ENCODE measurements at regions of chr6 and their contacts with region 1.

Region 1: DNA sequence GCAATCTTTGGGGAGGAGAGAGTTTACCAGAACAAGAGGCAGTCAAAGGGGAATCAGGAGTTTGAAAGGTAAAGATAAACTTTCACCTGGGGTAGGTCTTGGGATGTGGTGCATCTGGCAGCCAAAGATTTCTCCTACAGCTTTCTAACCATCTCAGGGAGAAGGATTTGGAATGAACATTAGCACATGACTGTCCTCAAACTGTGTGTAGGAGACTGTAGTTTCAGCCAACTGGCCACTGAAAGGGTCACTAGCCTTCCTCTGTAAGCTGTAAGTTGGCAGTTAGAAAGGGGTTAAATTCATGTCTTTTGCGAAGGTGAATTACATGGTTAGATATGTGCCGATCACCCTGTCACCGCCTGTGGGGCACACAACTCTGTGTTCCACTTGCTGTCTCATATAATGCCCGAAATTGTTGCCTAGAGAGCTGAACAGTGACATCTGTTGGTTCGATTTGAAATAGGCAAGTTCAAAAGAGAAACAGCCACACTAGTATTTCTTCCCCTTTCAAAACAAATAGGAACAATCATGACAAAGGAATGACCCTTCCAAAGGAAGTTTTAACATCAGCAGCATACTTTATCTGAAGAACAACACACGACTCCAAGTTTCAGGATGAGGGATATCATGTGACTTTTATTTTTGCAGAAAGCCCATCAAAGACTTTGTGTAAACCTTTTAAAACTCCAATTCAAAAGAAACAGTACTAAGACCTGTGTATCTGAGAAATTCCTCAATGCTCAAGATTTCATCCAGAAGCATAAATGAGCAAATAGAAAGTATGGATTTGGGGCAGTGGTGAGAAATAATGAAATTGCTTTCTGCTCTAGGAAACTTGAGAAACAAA is 1.1 kb upstream of the OPN5 start:
- DNase-seq: no peak
- H3K4me3 ChIP-seq: no peak overlapping the region
- H3K27ac ChIP-seq: no peak overlapping the region
- H3K4me1 ChIP-seq: peaks cover 0 to 6% (median 4%) of the 10 kb centered on the region in 4 donors
- H3K27me3 ChIP-seq: no peaks in the 10 kb centered on the region
- CTCF ChIP-seq: peak; percentile 2 to 71 (median 56)
- EP300 ChIP-seq: no peak
- POLR2A ChIP-seq: no peak

Region 2: DNA sequence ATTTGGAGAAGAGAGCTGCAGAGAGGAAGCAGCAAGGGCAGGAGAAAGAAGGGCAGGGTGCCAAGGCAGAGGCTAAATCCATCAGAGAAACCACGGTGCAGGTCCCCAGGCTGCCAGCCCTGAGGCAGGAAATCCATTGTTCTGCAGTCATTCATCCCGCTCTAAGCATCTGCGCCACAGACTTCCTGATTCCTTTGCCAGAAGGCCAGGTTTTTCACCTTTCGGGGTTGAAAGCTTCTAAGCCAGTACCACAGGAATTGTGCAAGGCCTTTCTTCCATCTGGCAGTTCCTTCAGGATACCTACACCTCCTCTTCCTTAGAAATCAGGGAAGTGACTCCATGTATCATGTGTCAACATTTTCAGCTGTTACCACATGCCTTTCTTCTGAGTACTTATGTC is 904.6 kb before region 1 on chr6:
- intact Hi-C with region 1: no loop called
- DNase-seq: no peak
- H3K4me3 ChIP-seq: no peak overlapping the region
- H3K27ac ChIP-seq: no peak overlapping the region
- H3K4me1 ChIP-seq: no peaks in the 10 kb centered on the region
- H3K27me3 ChIP-seq: no peaks in the 10 kb centered on the region
- CTCF ChIP-seq: no peak
- EP300 ChIP-seq: no peak
- POLR2A ChIP-seq: no peak

Region 3: DNA sequence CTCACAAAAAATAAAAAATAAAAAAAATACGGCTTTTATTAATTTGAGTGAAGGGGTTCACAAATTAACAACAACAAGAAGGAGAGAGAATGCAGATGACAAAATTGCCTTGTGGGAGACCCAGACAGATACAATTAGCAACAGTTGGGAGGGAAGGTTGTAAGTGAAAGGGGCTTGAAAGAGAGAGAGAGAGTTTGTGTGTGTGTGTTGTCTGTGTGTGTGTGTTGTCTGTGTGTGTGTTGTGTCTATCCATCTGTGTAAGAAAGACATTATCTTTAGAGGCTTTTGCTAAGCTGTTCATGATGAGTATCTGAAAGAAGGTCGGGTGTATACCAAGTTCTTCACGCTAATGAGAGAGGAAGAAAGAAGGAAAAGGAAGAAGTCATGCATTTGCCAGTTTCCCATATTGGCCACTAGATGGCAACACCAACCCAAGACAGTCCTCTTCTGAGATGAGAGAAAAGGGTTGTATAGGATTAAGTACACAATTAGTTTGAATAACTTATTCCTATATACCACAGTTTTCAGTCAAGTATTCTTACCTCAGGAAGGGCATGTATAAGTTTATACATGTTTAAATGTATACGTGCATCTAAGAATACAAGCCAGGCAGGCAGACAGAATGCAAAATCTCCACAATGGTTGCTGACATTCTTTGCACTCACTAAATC is 366.8 kb before region 1 on chr6:
- intact Hi-C with region 1: loop called (anchors 2 kb)
- DNase-seq: no peak
- H3K4me3 ChIP-seq: peak overlapping the region; percentile 35 to 53 (median 44)
- H3K27ac ChIP-seq: peak overlapping the region in 2 of 4 donors; percentile 36 to 52
- H3K4me1 ChIP-seq: peaks cover 4 to 20% (median 14%) of the 10 kb centered on the region in 4 donors
- H3K27me3 ChIP-seq: no peaks in the 10 kb centered on the region
- CTCF ChIP-seq: peak; percentile 82 to 91 (median 89)
- EP300 ChIP-seq: no peak
- POLR2A ChIP-seq: no peak

Region 4: GRCh38 chr6:47631269-47631772 is 149.4 kb before region 1 on chr6:
- intact Hi-C with region 1: loop called (anchors 5 kb)
- DNase-seq: no peak
- H3K4me3 ChIP-seq: no peak overlapping the region
- H3K27ac ChIP-seq: no peak overlapping the region
- H3K4me1 ChIP-seq: peaks cover 11 to 24% (median 17%) of the 10 kb centered on the region in 4 donors
- H3K27me3 ChIP-seq: no peaks in the 10 kb centered on the region
- CTCF ChIP-seq: peak; percentile 42 to 63 (median 54)
- EP300 ChIP-seq: no peak
- POLR2A ChIP-seq: no peak

Region 5: GRCh38 chr6:47846752-47847151 is 66.0 kb after region 1 on chr6:
- intact Hi-C with region 1: loop called (anchors 2 kb)
- DNase-seq: no peak
- H3K4me3 ChIP-seq: no peak overlapping the region
- H3K27ac ChIP-seq: no peak overlapping the region
- H3K4me1 ChIP-seq: no peaks in the 10 kb centered on the region
- H3K27me3 ChIP-seq: no peaks in the 10 kb centered on the region
- CTCF ChIP-seq: no peak
- EP300 ChIP-seq: no peak
- POLR2A ChIP-seq: no peak

Region 6: DNA sequence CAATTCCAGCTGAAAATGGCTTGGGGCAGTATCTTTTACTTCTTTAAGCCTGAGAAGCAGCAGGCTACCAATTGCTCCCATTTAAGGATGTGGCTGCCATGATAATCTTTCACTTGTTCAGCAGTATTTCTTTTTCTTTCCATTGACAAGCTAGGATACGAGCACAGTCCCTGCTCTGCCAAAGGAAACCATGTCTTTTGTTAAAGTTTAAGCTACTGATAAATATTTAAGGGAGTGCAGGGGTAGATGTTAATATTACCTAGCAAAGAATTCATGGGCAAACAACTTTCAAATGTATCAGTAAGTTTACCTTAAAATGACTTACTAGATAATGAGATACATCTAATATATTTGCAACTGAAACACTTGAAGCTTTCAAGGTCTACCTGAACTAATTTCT is 78.4 kb after region 1 on chr6:
- intact Hi-C with region 1: no loop called
- DNase-seq: no peak
- H3K4me3 ChIP-seq: no peak overlapping the region
- H3K27ac ChIP-seq: no peak overlapping the region
- H3K4me1 ChIP-seq: peaks cover 0 to 6% (median 2%) of the 10 kb centered on the region in 4 donors
- H3K27me3 ChIP-seq: no peaks in the 10 kb centered on the region
- CTCF ChIP-seq: no peak
- EP300 ChIP-seq: no peak
- POLR2A ChIP-seq: no peak

Region 7: GRCh38 chr6:47879015-47879414 is 98.3 kb after region 1 on chr6:
- intact Hi-C with region 1: no loop called
- DNase-seq: no peak
- H3K4me3 ChIP-seq: no peak overlapping the region
- H3K27ac ChIP-seq: no peak overlapping the region
- H3K4me1 ChIP-seq: no peaks in the 10 kb centered on the region
- H3K27me3 ChIP-seq: no peaks in the 10 kb centered on the region
- CTCF ChIP-seq: no peak
- EP300 ChIP-seq: no peak
- POLR2A ChIP-seq: no peak

Region 8: DNA sequence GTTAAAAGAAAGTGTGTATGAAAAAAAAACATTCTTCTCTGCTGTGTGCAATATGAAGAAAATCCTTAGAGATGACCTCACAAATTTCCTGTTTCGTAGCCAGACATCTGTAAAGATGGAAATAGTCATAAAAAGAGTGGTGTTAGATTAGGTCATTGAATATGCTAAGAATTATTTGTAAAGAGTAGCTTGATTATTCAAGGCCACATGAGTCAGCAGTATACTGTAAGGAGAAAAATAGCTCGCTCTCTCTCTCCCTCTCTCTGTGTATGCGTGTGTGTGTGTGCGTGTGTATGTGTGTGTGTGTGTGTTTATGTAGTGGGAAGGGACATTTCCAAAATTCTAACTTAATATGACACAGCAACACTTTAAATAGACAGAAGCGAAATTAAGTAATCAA is 251.4 kb after region 1 on chr6:
- intact Hi-C with region 1: no loop called
- DNase-seq: no peak
- H3K4me3 ChIP-seq: no peak overlapping the region
- H3K27ac ChIP-seq: no peak overlapping the region
- H3K4me1 ChIP-seq: no peaks in the 10 kb centered on the region
- H3K27me3 ChIP-seq: no peaks in the 10 kb centered on the region
- CTCF ChIP-seq: no peak
- EP300 ChIP-seq: no peak
- POLR2A ChIP-seq: no peak